A673 (cell line): ENCODE measurements at regions of chr1 and their contacts with region 1.

Region 1: GRCh38 chr1:156480411-156481192 is 20.0 kb downstream of the MEF2D start:
- DNase-seq: peak; percentile 83
- H3K4me3 ChIP-seq: no peak overlapping the region
- H3K27ac ChIP-seq: no peak overlapping the region
- H3K4me1 ChIP-seq: no peaks in the 10 kb centered on the region
- H3K27me3 ChIP-seq: no peaks in the 10 kb centered on the region
- CTCF ChIP-seq: peak; percentile 83

Region 2: DNA sequence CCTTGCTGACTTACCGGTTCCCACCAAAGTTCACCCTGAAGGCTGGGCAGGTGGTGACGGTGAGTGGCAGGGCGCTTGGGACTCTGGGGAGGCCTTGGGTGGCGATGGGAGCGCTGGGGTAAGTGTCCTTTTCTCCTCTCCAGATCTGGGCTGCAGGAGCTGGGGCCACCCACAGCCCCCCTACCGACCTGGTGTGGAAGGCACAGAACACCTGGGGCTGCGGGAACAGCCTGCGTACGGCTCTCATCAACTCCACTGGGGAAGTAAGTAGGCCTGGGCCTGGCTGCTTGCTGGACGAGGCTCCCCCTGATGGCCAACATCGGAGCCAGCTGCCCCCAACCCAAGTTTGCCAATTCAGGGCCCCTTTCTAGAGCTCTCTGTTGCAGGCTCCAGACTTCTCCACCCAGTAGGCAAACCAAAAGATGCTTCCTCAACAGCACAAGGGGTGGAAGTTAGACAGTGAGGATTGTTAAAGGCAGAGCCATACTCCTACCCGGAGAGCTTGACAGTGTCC is 343.6 kb before region 1 on chr1:
- CTCF ChIA-PET with region 1: no interaction called
- POLR2A ChIA-PET with region 1: no interaction called
- intact Hi-C with region 1: no loop called
- DNase-seq: no peak
- H3K4me3 ChIP-seq: no peak overlapping the region
- H3K27ac ChIP-seq: no peak overlapping the region
- H3K4me1 ChIP-seq: no peaks in the 10 kb centered on the region
- H3K27me3 ChIP-seq: no peaks in the 10 kb centered on the region
- CTCF ChIP-seq: no peak

Region 3: DNA sequence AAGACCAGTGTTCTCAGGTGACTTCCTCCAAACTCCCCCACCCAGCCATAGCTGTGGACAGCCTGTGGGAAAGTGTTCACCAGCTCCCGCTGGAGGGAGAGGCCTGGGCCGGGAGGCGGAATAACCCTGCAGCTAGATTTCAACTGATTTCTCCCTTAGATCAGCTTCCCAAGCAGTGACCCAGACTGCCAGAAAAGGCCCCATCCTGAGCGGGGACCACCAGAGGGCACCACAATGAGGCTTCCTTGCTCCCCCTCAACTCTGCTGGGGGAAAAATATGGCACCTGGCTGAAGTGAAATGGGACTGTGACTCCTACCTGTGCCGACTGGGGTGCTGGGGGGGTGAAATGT is 60.8 kb before region 1 on chr1:
- CTCF ChIA-PET with region 1: no interaction called
- POLR2A ChIA-PET with region 1: no interaction called
- intact Hi-C with region 1: no loop called
- DNase-seq: no peak
- H3K4me3 ChIP-seq: peak overlapping the region; percentile 38
- H3K27ac ChIP-seq: no peak overlapping the region
- H3K4me1 ChIP-seq: peaks cover 14% of the 10 kb centered on the region
- H3K27me3 ChIP-seq: peaks cover 90% of the 10 kb centered on the region
- CTCF ChIP-seq: peak; percentile 53

Region 4: DNA sequence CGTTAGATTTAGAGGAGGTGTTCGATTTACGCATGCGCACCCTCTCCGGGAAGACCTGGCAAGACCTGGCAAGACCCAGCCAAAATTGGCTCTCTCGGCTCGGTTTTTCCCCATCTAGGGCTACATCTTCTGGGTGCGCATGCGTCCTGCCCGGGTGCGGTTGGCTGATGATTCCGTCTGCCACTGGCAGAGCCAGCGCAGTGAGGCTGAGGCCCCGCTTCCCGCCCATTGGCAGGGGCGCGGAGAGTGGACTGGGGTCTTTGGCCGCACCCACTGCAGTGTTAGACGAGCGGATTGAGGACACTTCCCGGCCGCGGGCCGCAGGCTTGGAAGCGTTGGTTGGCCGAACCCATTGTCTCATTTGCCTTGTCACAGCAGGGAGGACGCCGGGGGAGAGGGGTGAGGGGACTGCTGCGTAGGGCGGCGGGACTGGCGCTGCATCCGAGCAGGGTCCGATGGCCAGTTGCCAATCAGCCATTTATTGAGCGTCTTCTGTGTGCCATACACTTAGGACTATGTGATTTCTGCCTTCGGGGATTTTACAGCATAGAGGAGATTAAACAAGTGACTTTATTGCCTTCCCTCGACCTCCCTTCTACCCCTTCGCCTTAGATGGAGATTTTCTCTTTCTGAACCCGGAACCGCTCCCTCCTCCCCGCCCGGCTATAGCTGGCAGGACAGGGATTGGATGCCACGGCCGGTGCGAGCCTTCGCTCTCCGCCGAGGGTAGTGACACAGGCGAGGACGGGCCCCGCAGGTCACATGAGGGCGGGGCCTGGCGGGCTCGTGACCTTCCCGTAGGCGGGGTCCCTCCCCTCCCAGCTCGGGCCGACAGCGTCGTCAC is 23.8 kb before region 1 on chr1:
- CTCF ChIA-PET with region 1: interaction called, 10 read pairs
- POLR2A ChIA-PET with region 1: no interaction called
- intact Hi-C with region 1: no loop called
- DNase-seq: peak; percentile 96
- H3K4me3 ChIP-seq: peak overlapping the region; percentile 45
- H3K27ac ChIP-seq: peak overlapping the region; percentile 8
- H3K4me1 ChIP-seq: no peaks in the 10 kb centered on the region
- H3K27me3 ChIP-seq: no peaks in the 10 kb centered on the region
- CTCF ChIP-seq: no peak

Region 5: GRCh38 chr1:156500797-156501499 is 20.3 kb after region 1 on chr1:
- CTCF ChIA-PET with region 1: interaction called, 28 read pairs
- POLR2A ChIA-PET with region 1: interaction called, 8 read pairs
- intact Hi-C with region 1: no loop called
- DNase-seq: peak; percentile 97
- H3K4me3 ChIP-seq: peak overlapping the region; percentile 98
- H3K27ac ChIP-seq: peak overlapping the region; percentile 98
- H3K4me1 ChIP-seq: peaks cover 69% of the 10 kb centered on the region
- H3K27me3 ChIP-seq: no peaks in the 10 kb centered on the region
- CTCF ChIP-seq: peak; percentile 59

Region 6: DNA sequence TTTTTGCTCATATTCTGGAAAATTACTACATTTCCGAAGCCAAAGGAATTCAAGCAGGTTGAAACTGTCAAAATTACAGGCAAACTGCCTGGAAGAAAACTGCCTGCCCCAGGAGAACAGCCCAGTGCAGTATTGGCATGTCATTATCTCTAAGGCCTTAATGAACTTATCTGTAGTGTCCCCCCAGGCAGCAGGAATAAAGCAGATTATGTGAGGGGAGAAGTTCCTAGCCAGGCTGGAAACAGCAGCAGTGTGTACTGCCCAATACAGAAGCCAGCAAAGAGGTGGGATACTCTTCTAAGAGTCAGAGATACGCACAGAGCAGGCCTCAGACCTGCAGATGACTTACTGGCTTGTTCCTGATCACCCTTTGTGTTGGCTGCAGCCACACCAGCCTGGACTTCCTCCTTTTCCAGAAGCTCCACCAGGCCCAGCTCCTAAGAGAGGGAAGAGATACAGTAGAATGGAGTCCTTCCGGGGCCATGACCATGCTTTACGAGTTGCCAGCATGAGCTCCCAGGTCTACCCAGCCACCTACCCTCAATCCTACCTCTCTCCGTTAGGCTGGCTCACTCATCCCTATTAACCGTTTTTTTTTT is 80.1 kb after region 1 on chr1:
- CTCF ChIA-PET with region 1: no interaction called
- POLR2A ChIA-PET with region 1: no interaction called
- intact Hi-C with region 1: no loop called
- DNase-seq: no peak
- H3K4me3 ChIP-seq: no peak overlapping the region
- H3K27ac ChIP-seq: no peak overlapping the region
- H3K4me1 ChIP-seq: no peaks in the 10 kb centered on the region
- H3K27me3 ChIP-seq: no peaks in the 10 kb centered on the region
- CTCF ChIP-seq: no peak

Region 7: GRCh38 chr1:156571949-156572662 is 91.5 kb after region 1 on chr1 and contains the start of gene IQGAP3:
- CTCF ChIA-PET with region 1: interaction called, 3 read pairs
- POLR2A ChIA-PET with region 1: no interaction called
- intact Hi-C with region 1: loop called (anchors 5 kb)
- DNase-seq: peak; percentile 86
- H3K4me3 ChIP-seq: peak within 1 kb of the TSS; percentile 80
- H3K27ac ChIP-seq: peak within 1 kb of the TSS; percentile 34
- H3K4me1 ChIP-seq: no peaks in the 10 kb centered on the region
- H3K27me3 ChIP-seq: no peaks in the 10 kb centered on the region
- CTCF ChIP-seq: no peak
- total RNA-seq, gene IQGAP3: 35.3 and 37.5 TPM in 2 replicates

Region 8: DNA sequence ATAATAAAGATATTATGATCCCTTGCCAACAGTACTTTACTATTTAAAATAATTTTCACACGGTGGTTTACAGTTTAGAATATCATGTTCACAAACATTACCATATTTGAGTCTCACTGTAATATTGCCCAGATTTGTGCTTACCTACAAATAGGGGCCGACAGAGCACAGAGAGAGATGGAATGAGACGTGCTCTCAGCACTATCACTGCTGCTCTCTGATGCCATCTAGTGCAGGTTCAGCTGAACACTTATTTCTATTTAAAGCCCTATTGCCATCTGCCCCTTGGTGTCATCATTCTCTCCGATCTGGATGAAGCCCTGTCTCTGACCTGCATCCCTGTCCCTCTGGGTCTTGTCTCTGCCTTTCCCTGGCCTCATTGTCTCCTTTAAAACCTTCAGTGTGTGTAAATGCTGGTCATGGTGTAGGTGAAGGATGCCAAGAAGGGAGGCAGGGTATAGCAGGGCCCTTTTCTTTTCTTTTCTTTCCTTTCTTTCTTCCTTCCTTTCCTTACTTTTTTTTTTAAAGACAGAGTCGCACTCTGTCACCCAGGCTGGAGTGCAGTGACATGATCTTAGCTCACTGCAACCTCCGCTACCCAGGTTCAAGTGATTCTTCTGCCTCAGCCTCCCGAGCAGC is 127.6 kb after region 1 on chr1:
- CTCF ChIA-PET with region 1: interaction called, 9 read pairs
- POLR2A ChIA-PET with region 1: no interaction called
- intact Hi-C with region 1: loop called (anchors 1 kb)
- DNase-seq: peak; percentile 80
- H3K4me3 ChIP-seq: no peak overlapping the region
- H3K27ac ChIP-seq: no peak overlapping the region
- H3K4me1 ChIP-seq: no peaks in the 10 kb centered on the region
- H3K27me3 ChIP-seq: no peaks in the 10 kb centered on the region
- CTCF ChIP-seq: peak; percentile 83